ENCODE measurements at regions of chr11 and their contacts with region 1.

Region 1: DNA sequence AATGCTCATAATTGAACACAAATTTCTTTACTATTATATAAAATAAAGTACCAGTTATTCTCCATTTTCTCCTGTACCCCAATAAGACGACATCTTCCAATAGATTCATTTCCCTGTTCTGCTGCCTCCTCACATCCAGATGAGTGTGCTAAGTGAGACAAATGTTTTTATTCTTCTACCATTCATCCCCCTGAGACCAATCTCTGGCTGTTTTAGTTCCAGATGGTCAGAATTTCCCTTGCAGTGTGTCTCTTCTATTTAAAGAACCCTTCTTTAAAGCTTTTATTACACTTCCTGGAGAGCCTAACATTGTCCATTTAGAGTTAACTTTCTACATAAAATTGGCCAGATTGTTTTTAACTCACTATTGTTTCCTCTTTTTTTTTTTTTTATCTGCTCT is 41.2 kb upstream of the GLYATL1 start:
- DNase-seq: no peak
- H3K4me3 ChIP-seq: no peak overlapping the region
- CTCF ChIP-seq: no peak
- POLR2A ChIP-seq: no peak

Region 2: GRCh38 chr11:58654079-58654907 is 243.8 kb before region 1 on chr11:
- intact Hi-C with region 1: loop called (anchors 5 kb)
- DNase-seq: peak; percentile 62 to 92
- H3K4me3 ChIP-seq: no peak overlapping the region
- CTCF ChIP-seq: peak in 1 of 3 donors; percentile 17
- POLR2A ChIP-seq: no peak